B cell (primary cell): ENCODE measurements at regions of chr6 and their contacts with region 1.

Region 1: GRCh38 chr6:3258720-3259490 is at the start of gene PSMG4:
- DNase-seq: peak; percentile 92
- ATAC-seq: peak; percentile 92
- H3K4me3 ChIP-seq: peak within 1 kb of the TSS; percentile 65 to 86 (median 78)
- H3K4me3 Mint-ChIP-seq: peak within 1 kb of the TSS; percentile 97
- H3K27ac ChIP-seq: peak within 1 kb of the TSS; percentile 12 to 65
- H3K27ac Mint-ChIP-seq: peak within 1 kb of the TSS; percentile 91
- H3K4me1 ChIP-seq: peaks cover 20 to 34% of the 10 kb centered on the region in 2 donors
- H3K4me1 Mint-ChIP-seq: peaks cover 35% of the 10 kb centered on the region
- H3K27me3 ChIP-seq: no peaks in the 10 kb centered on the region
- H3K27me3 Mint-ChIP-seq: peaks cover 3% of the 10 kb centered on the region
- CTCF ChIP-seq: no peak
- total RNA-seq, gene PSMG4: 31.8 and 31.9 TPM in 2 replicates

Region 2: DNA sequence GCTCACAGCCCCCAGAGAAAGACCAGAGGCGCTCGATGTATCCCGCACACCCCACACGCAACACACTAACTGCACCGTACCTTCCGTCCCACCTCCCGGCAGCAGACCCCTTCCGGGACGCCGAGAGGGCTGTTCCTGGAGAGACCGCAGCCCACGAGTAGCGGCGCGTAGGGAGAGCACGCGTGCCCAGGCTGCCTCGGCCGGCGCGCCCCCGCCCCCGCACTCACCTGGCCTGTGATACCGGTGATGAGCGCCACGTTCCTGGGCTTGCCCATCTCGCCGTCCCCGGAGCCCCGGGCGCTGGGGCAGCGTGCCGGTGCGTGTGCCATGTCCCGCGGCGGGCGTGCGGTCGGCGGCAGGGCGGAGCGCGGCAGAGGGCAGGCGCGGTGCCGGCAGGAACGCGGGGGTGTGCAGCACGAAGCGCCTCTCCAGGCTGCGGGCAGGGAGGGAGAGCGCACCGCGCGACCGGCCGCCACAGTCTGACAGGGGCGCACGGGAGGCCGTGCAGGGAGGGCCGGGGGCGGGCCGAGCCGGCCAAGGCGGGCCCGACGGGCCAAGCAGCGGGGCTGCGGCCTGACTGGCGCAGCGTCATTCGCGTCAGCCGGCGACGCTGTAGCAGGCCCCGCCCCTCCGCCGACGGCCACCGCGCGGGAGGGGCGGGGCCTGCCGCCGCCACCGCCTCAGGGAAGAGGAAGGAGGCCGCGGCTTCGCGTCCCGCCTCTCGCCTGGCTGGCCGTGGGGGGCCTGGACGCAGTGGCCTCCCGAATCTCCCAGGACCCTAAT is 1013.6 kb before region 1 on chr6 and contains the start of gene GMDS:
- CTCF ChIA-PET with region 1: no interaction called
- POLR2A ChIA-PET with region 1: no interaction called
- intact Hi-C with region 1: loop called (anchors 5 kb)
- DNase-seq: peak; percentile 93
- ATAC-seq: peak; percentile 97
- H3K4me3 ChIP-seq: peak within 1 kb of the TSS; percentile 65 to 98 (median 86)
- H3K4me3 Mint-ChIP-seq: peak within 1 kb of the TSS; percentile 92
- H3K27ac ChIP-seq: peak within 1 kb of the TSS; percentile 85 to 95
- H3K27ac Mint-ChIP-seq: peak within 1 kb of the TSS; percentile 92
- H3K4me1 ChIP-seq: peaks cover 14 to 21% of the 10 kb centered on the region in 2 donors
- H3K4me1 Mint-ChIP-seq: peaks cover 34% of the 10 kb centered on the region
- H3K27me3 ChIP-seq: no peaks in the 10 kb centered on the region
- H3K27me3 Mint-ChIP-seq: no peaks in the 10 kb centered on the region
- CTCF ChIP-seq: no peak
- total RNA-seq, gene GMDS: 16.4 and 22.5 TPM in 2 replicates

Region 3: DNA sequence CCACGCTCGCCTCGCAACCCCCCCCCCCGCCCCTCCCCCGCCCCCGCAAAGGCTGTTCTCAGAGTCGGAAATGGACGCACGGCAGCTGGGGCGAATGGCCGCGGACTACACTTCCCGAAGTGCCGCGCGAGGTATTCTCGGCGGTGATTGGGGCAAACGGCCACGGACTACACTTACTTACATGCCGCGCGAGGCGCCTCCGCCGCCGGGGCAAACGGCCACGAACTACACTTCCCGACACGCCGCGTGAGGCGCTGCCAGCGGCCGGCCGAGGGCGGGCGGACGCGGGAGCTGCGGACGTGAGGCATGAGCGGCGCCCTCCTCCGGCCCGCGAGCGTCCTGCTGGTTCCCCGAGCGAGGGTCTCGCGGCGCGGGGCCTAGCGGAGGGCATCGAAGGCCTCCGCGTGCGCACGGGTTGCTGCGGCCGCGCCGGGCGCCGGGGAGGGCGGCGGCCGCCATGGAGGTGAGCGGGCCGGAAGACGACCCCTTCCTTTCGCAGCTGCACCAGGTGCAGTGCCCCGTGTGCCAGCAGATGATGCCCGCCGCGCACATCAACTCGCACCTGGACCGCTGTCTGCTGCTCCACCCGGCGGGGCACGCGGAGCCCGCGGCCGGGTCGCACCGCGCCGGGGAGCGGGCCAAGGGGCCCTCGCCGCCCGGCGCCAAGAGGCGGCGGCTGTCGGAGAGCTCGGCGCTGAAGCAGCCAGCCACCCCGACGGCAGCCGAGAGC is 493.6 kb before region 1 on chr6 and contains the start of gene WRNIP1:
- CTCF ChIA-PET with region 1: no interaction called
- POLR2A ChIA-PET with region 1: no interaction called
- intact Hi-C with region 1: loop called (anchors 2 kb)
- DNase-seq: peak; percentile 98
- ATAC-seq: peak; percentile 87
- H3K4me3 ChIP-seq: peak within 1 kb of the TSS; percentile 66 to 90 (median 77)
- H3K4me3 Mint-ChIP-seq: peak within 1 kb of the TSS; percentile 98
- H3K27ac ChIP-seq: peak within 1 kb of the TSS; percentile 96 to 97
- H3K27ac Mint-ChIP-seq: peak within 1 kb of the TSS; percentile 100
- H3K4me1 ChIP-seq: peaks cover 25 to 33% of the 10 kb centered on the region in 2 donors
- H3K4me1 Mint-ChIP-seq: peaks cover 43% of the 10 kb centered on the region
- H3K27me3 ChIP-seq: no peaks in the 10 kb centered on the region
- H3K27me3 Mint-ChIP-seq: no peaks in the 10 kb centered on the region
- CTCF ChIP-seq: peak; percentile 60
- total RNA-seq, gene WRNIP1: 32.1 and 35.2 TPM in 2 replicates

Region 4: DNA sequence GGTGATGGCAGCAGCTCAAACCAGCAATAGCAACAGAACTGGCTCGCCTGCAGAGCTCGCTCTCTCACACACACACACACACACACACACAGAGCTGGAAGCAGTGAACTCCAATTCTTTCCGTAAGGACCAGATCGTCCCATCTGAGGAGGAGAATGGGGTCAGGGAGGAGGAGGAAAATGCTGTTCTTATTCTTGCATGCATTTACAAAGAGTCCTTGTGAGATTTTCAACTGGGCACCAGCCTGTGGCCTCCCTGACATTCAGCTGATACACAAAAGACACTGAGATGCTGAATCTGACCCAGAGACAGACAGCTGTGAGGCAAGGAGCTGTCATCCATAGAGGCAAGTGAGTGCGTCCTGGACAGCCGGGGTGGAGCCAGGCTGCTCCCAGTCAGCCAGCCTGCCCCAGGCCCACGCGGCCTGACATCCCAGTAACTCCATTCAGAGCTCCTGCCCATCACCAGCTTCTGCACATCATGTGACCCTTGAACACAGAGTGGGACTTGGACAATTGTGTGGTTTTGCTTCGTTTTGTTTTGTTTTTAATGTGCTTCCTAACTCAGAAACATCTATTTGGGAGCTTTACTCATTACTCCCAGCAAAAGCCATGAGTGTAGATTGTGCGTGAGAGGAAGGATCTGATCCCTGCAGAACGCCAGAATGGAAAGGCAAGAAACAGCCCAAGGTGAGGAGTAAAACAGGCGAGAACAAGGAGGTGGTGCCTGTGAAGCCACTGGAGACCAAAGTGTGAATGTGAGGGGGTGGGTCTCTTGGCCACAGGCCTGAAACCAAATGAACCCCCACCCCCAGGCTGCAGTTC is 357.9 kb before region 1 on chr6:
- CTCF ChIA-PET with region 1: no interaction called
- POLR2A ChIA-PET with region 1: no interaction called
- intact Hi-C with region 1: loop called (anchors 5 kb)
- DNase-seq: no peak
- ATAC-seq: no peak
- H3K4me3 ChIP-seq: peak overlapping the region in 4 of 5 experiments; percentile 10 to 95 (median 90)
- H3K4me3 Mint-ChIP-seq: peak overlapping the region; percentile 100
- H3K27ac ChIP-seq: peak overlapping the region; percentile 31 to 91
- H3K27ac Mint-ChIP-seq: peak overlapping the region; percentile 97
- H3K4me1 ChIP-seq: peaks cover 45 to 48% of the 10 kb centered on the region in 2 donors
- H3K4me1 Mint-ChIP-seq: peaks cover 56% of the 10 kb centered on the region
- H3K27me3 ChIP-seq: no peaks in the 10 kb centered on the region
- H3K27me3 Mint-ChIP-seq: no peaks in the 10 kb centered on the region
- CTCF ChIP-seq: no peak

Region 5: DNA sequence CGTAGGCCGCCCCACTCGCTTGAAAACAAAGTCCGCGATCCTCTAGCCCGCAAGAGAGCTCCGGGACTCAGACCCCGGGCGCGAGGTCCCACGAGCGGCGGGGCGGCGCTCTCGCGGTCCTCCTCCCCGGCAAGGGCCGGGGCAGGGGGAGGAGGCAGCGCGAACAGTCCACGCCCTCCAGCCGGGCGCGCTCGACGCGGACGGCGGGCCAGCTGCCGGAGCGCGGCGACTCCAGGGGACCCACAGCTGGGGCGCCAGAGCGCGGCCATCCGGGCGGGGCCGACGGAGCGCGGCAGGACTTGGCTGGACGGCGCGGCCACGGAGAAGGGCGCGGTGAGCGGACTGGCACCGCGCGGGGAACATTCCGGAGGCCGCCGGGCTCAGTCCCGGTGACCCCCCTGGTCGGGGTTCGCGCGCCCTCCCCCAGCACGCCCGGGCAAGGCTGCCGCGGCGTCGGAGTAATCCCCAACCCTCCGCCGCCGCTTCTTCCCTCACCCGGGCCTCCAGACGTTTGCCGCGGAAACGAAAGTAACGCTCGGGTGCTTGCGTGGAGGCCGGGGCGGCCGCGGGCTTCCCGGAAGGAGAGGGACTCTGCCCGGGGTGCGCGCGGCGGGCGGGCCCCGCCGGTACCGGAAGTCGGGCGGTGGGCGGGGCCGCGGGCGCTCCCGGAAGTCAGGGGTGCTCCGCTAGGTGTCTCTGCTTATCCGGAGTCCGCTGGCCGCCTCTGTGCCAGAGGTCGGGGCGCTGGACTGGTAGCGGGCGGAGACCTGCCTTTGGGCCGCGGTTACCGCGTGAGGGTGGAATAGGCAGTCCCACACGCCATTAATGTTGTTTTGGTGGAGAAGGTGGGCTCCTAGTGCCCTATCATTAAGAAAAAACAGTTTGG is 190.3 kb before region 1 on chr6 and contains the start of gene RIPK1:
- CTCF ChIA-PET with region 1: no interaction called
- POLR2A ChIA-PET with region 1: no interaction called
- intact Hi-C with region 1: loop called (anchors 1 kb)
- DNase-seq: peak; percentile 95
- ATAC-seq: peak; percentile 73
- H3K4me3 ChIP-seq: peak within 1 kb of the TSS; percentile 55 to 87 (median 85)
- H3K4me3 Mint-ChIP-seq: peak within 1 kb of the TSS; percentile 98
- H3K27ac ChIP-seq: peak within 1 kb of the TSS; percentile 92 to 99
- H3K27ac Mint-ChIP-seq: peak within 1 kb of the TSS; percentile 99
- H3K4me1 ChIP-seq: peaks cover 17 to 23% of the 10 kb centered on the region in 2 donors
- H3K4me1 Mint-ChIP-seq: peaks cover 43% of the 10 kb centered on the region
- H3K27me3 ChIP-seq: no peaks in the 10 kb centered on the region
- H3K27me3 Mint-ChIP-seq: no peaks in the 10 kb centered on the region
- CTCF ChIP-seq: no peak
- total RNA-seq, gene RIPK1: 26.2 and 28.1 TPM in 2 replicates

Region 6: DNA sequence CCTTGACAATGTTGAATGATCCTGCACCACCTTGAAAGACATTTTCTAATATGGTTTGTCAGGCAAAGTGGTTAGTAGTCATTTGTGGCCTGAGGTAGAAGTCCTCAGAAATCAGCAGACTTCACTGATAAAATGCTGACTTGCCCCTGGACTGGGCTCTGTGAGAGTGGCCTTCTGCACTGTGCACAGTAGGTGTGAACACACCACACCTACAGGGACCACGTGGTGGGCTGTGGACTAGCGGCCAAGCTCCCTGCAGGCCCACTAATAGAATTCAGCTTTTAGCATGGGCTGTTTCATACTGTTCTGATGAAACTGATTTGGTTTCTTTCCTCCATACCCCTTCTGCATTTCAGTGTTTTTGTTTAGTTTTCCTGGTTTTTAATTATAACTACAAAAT is 133.1 kb before region 1 on chr6:
- CTCF ChIA-PET with region 1: interaction called, 5 read pairs
- POLR2A ChIA-PET with region 1: no interaction called
- intact Hi-C with region 1: loop called (anchors 2 kb)
- DNase-seq: no peak
- ATAC-seq: no peak
- H3K4me3 ChIP-seq: no peak overlapping the region
- H3K4me3 Mint-ChIP-seq: no peak overlapping the region
- H3K27ac ChIP-seq: no peak overlapping the region
- H3K27ac Mint-ChIP-seq: no peak overlapping the region
- H3K4me1 ChIP-seq: peaks cover 0 to 12% of the 10 kb centered on the region in 2 donors
- H3K4me1 Mint-ChIP-seq: peaks cover 10% of the 10 kb centered on the region
- H3K27me3 ChIP-seq: no peaks in the 10 kb centered on the region
- H3K27me3 Mint-ChIP-seq: no peaks in the 10 kb centered on the region
- CTCF ChIP-seq: no peak

Region 7: DNA sequence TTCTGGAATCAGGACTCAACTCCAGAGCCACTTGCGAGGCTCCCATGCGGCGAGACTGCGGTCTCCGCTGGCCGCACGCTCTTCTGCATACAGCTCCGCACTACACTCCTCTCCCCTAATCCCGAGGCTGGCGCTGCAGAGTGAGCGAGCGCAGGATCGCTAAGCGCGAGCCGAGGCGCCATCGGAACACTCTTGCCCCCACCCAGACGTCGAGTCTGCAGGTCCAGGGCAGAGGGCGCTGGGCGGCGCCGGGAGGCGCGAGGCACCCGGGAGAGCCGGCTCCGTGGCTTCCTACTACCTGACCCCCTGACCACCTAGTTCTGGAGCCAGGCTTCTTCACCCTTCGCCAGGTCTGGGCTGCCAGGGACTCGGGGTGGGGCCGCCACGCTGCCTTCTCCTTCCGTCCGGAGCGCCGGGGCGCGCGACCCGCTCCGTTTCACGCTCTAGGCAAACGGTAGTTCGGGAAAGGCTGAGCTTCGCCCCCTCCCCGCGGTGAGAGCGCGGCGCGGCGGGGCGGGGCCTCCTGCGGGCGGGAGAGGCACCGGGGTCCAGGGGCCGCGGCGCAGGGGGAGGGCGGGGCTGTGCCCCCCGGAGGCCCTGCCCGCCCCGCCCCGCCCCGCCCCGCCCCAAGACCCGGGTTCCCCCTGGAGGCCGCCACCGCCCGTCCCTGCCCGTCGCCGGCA is 96.2 kb before region 1 on chr6:
- CTCF ChIA-PET with region 1: interaction called, 6 read pairs
- POLR2A ChIA-PET with region 1: interaction called, 4 read pairs
- intact Hi-C with region 1: loop called (anchors 1 kb)
- DNase-seq: peak; percentile 81
- ATAC-seq: peak; percentile 79
- H3K4me3 ChIP-seq: peak overlapping the region in 4 of 5 experiments; percentile 71 to 81 (median 78)
- H3K4me3 Mint-ChIP-seq: peak overlapping the region; percentile 83
- H3K27ac ChIP-seq: peak overlapping the region in 1 of 2 donors; percentile 51
- H3K27ac Mint-ChIP-seq: peak overlapping the region; percentile 71
- H3K4me1 ChIP-seq: peaks cover 10 to 18% of the 10 kb centered on the region in 2 donors
- H3K4me1 Mint-ChIP-seq: peaks cover 23% of the 10 kb centered on the region
- H3K27me3 ChIP-seq: peaks cover 0 to 10% (median 0%) of the 10 kb centered on the region in 4 experiments
- H3K27me3 Mint-ChIP-seq: peaks cover 4% of the 10 kb centered on the region
- CTCF ChIP-seq: no peak

Region 8: DNA sequence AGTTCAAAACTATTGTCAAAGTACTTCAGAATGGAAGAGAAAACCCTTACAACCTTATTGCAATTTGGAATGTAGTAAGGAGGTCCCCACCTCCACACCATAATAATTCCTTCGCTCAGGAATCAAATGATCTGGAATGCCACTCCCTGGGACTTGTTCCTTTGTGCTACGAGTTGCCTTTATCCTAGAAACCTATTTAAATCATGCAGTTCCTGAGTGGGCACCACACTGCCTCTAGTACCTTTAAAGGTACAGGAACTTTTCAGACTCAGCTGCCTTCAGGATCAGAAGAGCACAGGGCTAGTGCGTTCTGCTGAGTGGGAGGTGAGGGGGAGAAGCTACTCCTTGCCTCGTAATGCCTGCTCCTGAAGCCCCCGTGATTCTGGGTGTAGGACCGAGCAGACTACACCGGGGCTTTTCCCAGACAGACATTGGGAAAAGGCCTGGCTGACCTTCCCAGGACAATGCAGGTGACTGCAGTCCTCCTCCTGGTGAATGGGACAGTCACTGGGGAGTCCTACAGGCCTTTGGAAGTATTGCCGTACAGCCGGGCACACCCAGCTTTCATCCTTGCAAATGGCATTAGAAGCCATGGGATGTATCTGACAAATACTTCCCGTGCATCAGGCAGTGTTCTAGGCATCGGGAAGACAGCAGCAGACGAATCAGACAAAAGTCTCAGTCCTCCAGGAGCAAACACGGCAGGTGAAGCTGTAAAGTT is 19.6 kb before region 1 on chr6:
- CTCF ChIA-PET with region 1: no interaction called
- POLR2A ChIA-PET with region 1: no interaction called
- intact Hi-C with region 1: no loop called
- DNase-seq: no peak
- ATAC-seq: no peak
- H3K4me3 ChIP-seq: no peak overlapping the region
- H3K4me3 Mint-ChIP-seq: no peak overlapping the region
- H3K27ac ChIP-seq: no peak overlapping the region
- H3K27ac Mint-ChIP-seq: no peak overlapping the region
- H3K4me1 ChIP-seq: peaks cover 3 to 8% of the 10 kb centered on the region in 2 donors
- H3K4me1 Mint-ChIP-seq: peaks cover 4% of the 10 kb centered on the region
- H3K27me3 ChIP-seq: peaks cover 0 to 17% (median 4%) of the 10 kb centered on the region in 4 experiments
- H3K27me3 Mint-ChIP-seq: peaks cover 45% of the 10 kb centered on the region
- CTCF ChIP-seq: no peak